Activated T-helper 1 cell treated with anti-CD3 and anti-CD28 coated beads, Interleukin-12 subunit alpha, Interleukin-12 subunit beta, Interleukin-2, Interleukin-4 antibody, amounts not matched to agents 30 ng/mL and 10 ng/mL and 1 ng/mL, durations not matched to agents 14 hours and 24 hours and 36 hours (primary cell): ENCODE measurements at regions of chr11 and their contacts with region 1.

Region 1: GRCh38 chr11:9384535-9385303 is at the start of gene IPO7:
- DNase-seq: peak; percentile 87
- H3K4me3 Mint-ChIP-seq: peak within 1 kb of the TSS; percentile 96
- H3K27ac Mint-ChIP-seq: peak within 1 kb of the TSS; percentile 95
- H3K4me1 Mint-ChIP-seq: peaks cover 36% of the 10 kb centered on the region
- H3K27me3 Mint-ChIP-seq: no peaks in the 10 kb centered on the region
- total RNA-seq, gene IPO7: 136 and 153 TPM in 2 replicates

Region 2: GRCh38 chr11:8682303-8683114 is 702.2 kb before region 1 on chr11 and contains the starts of genes RPL27A and TRIM66:
- intact Hi-C with region 1: loop called (anchors 1 kb)
- DNase-seq: peak; percentile 99
- H3K4me3 Mint-ChIP-seq: peak within 1 kb of the TSS; percentile 97
- H3K27ac Mint-ChIP-seq: peak within 1 kb of the TSS; percentile 95
- H3K4me1 Mint-ChIP-seq: peaks cover 42% of the 10 kb centered on the region
- H3K27me3 Mint-ChIP-seq: no peaks in the 10 kb centered on the region
- total RNA-seq, gene RPL27A: 679 and 691 TPM in 2 replicates
- total RNA-seq, gene TRIM66: 11.7 and 14.2 TPM in 2 replicates

Region 3: DNA sequence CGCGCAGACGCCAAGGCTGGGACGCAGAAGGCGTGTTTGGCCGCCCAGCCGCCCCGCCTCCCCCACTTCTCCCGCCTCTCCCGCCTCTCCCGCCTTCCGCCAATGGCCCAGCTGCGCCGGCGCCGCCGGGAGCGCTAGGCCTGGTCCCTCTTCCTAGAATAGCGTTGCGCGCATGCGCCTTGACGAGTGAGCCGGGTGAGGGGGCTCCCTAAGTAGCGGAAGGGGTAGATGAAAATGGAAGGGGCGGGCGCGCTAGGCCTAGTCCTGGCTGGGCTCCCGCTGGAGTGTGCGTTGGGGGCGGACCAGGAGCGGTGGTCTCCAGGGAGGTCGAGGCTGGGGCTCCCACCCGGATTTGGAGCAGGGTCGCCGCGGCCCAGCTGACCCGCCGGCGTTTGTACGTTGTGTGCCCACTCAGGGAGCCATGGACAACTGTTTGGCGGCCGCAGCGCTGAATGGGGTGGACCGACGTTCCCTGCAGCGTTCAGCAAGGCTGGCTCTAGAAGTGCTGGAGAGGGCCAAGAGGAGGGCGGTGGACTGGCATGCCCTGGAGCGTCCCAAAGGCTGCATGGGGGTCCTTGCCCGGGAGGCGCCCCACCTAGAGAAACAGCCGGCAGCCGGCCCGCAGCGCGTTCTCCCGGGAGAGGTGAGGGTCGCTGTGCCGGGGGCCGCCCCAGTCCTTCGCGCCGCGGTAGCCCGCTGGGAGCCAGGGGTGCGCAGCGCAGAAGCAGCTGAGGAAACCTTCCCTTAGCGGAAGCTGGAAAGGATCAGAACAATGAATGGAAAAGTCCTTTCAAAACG is 473.5 kb before region 1 on chr11 and contains the start of gene AKIP1:
- intact Hi-C with region 1: loop called (anchors 2 kb)
- DNase-seq: peak; percentile 77
- H3K4me3 Mint-ChIP-seq: peak within 1 kb of the TSS; percentile 97
- H3K27ac Mint-ChIP-seq: peak within 1 kb of the TSS; percentile 87
- H3K4me1 Mint-ChIP-seq: peaks cover 45% of the 10 kb centered on the region
- H3K27me3 Mint-ChIP-seq: peaks cover 12% of the 10 kb centered on the region
- total RNA-seq, gene AKIP1: 33.4 and 36.9 TPM in 2 replicates

Region 4: GRCh38 chr11:9170450-9170849 is 214.3 kb before region 1 on chr11:
- intact Hi-C with region 1: loop called (anchors 2 kb)
- DNase-seq: no peak
- H3K4me3 Mint-ChIP-seq: no peak overlapping the region
- H3K27ac Mint-ChIP-seq: no peak overlapping the region
- H3K4me1 Mint-ChIP-seq: peaks cover 10% of the 10 kb centered on the region
- H3K27me3 Mint-ChIP-seq: no peaks in the 10 kb centered on the region

Region 5: GRCh38 chr11:9203691-9204311 is 180.9 kb before region 1 on chr11:
- intact Hi-C with region 1: loop called (anchors 5 kb)
- DNase-seq: no peak
- H3K4me3 Mint-ChIP-seq: no peak overlapping the region
- H3K27ac Mint-ChIP-seq: no peak overlapping the region
- H3K4me1 Mint-ChIP-seq: peaks cover 31% of the 10 kb centered on the region
- H3K27me3 Mint-ChIP-seq: no peaks in the 10 kb centered on the region

Region 6: GRCh38 chr11:9347100-9347499 is 37.6 kb before region 1 on chr11:
- intact Hi-C with region 1: no loop called
- DNase-seq: peak; percentile 2
- H3K4me3 Mint-ChIP-seq: no peak overlapping the region
- H3K27ac Mint-ChIP-seq: peak overlapping the region; percentile 14
- H3K4me1 Mint-ChIP-seq: peaks cover 25% of the 10 kb centered on the region
- H3K27me3 Mint-ChIP-seq: peaks cover 13% of the 10 kb centered on the region

Region 7: GRCh38 chr11:9363954-9364912 is 20.5 kb before region 1 on chr11:
- intact Hi-C with region 1: loop called (anchors 1 kb)
- DNase-seq: peak; percentile 76
- H3K4me3 Mint-ChIP-seq: peak overlapping the region; percentile 82
- H3K27ac Mint-ChIP-seq: peak overlapping the region; percentile 90
- H3K4me1 Mint-ChIP-seq: peaks cover 28% of the 10 kb centered on the region
- H3K27me3 Mint-ChIP-seq: peaks cover 5% of the 10 kb centered on the region

Region 8: DNA sequence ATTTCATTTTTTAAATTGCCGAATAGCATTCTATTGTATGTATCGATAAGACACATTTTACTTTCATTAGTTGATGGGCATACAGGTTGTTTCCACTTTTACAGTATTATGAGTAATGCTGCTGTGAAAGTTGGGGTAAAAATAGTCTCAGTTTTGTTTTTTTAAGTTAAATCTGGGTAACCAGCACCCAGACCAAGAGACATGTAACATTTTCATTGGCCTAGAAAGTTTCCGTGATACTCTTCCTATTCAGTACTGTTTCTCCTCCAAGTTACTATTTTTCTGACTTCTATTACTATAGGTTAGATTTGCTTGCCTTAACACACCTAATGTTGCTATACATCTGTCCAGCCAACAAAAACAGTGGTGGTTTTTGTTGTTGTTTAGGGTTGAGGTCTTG is 12.0 kb after region 1 on chr11:
- intact Hi-C with region 1: no loop called
- DNase-seq: no peak
- H3K4me3 Mint-ChIP-seq: no peak overlapping the region
- H3K27ac Mint-ChIP-seq: peak overlapping the region; percentile 45
- H3K4me1 Mint-ChIP-seq: peaks cover 47% of the 10 kb centered on the region
- H3K27me3 Mint-ChIP-seq: peaks cover 1% of the 10 kb centered on the region

Region 9: GRCh38 chr11:9428706-9429105 is 44.0 kb after region 1 on chr11:
- intact Hi-C with region 1: no loop called
- DNase-seq: no peak
- H3K4me3 Mint-ChIP-seq: no peak overlapping the region
- H3K27ac Mint-ChIP-seq: no peak overlapping the region
- H3K4me1 Mint-ChIP-seq: no peaks in the 10 kb centered on the region
- H3K27me3 Mint-ChIP-seq: no peaks in the 10 kb centered on the region

Region 10: GRCh38 chr11:9473408-9473807 is 88.7 kb after region 1 on chr11:
- intact Hi-C with region 1: no loop called
- DNase-seq: no peak
- H3K4me3 Mint-ChIP-seq: no peak overlapping the region
- H3K27ac Mint-ChIP-seq: no peak overlapping the region
- H3K4me1 Mint-ChIP-seq: peaks cover 10% of the 10 kb centered on the region
- H3K27me3 Mint-ChIP-seq: no peaks in the 10 kb centered on the region